ENCODE measurements at regions of chr1 and their contacts with region 1.

Region 1: DNA sequence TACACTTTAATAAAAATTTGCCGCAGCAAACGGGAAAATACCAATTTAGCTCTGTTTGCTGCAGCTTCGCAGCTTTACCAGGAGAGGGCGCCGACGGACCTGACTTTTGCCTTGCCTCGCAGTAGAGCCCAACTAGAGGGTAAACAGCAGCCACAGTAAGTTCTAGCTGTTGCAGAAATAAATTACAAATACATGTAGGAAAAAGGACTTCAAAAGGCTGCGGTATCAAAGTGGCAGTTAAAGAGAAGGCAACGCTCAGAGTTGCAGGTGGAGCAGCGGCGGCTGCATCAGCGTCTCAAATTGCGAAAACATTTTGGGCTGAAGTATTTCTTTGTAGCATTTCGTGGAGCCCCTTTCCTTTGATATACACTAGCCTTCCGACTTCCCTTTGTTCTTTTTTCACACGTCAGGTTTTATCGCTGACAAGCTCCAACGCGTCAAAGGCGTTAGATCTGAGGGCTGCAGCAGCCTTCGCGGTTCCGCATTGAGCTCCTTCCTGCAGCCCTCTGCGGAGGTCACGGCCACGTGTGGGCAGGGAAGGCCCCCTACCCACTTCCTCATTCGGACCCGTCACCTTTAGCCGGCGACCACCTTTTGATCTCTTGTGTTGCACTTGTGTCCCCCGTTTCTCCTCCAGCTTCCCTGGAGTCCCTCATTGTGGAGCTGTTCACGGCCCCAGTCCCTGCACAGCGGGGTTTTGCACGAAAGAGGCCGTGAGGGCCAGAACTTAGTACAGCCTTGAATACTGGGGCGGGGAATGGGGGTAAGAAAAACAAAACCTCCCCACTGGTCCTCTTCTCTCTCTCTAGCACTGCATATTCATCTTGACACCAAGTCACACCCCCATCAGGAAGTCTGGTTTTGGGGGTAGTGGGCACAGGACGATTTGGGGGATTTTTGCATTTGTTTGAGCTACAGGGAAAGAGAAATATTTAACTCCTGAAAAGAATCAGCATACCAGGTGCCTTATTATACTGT is 72.8 kb downstream of the S1PR1 start:
- DNase-seq: peak; percentile 39
- H3K4me3 ChIP-seq: peak overlapping the region in 3 of 4 donors; percentile 15 to 35 (median 25)
- H3K27ac ChIP-seq: peak overlapping the region in 2 of 4 donors; percentile 7 to 43
- H3K4me1 ChIP-seq: peaks cover 0 to 13% (median 0%) of the 10 kb centered on the region in 4 donors
- H3K27me3 ChIP-seq: peaks cover 18% of the 10 kb centered on the region
- CTCF ChIP-seq: peak; percentile 64 to 84 (median 77)
- EP300 ChIP-seq: no peak
- POLR2A ChIP-seq: no peak

Region 2: GRCh38 chr1:101352866-101353265 is 43.2 kb after region 1 on chr1:
- in situ Hi-C with region 1: loop called in 1 of 4 experiments (anchors 5 kb)
- intact Hi-C with region 1: no loop called
- DNase-seq: no peak
- H3K4me3 ChIP-seq: no peak overlapping the region
- H3K27ac ChIP-seq: no peak overlapping the region
- H3K4me1 ChIP-seq: no peaks in the 10 kb centered on the region
- H3K27me3 ChIP-seq: no peaks in the 10 kb centered on the region
- CTCF ChIP-seq: no peak
- EP300 ChIP-seq: no peak
- POLR2A ChIP-seq: no peak